ENCODE measurements at regions of chr2 and their contacts with region 1.

Region 1: GRCh38 chr2:71452565-71452964 is 796 bp upstream of the DYSF start:
- DNase-seq: no peak
- H3K4me3 ChIP-seq: no peak overlapping the region
- CTCF ChIP-seq: no peak

Region 2: DNA sequence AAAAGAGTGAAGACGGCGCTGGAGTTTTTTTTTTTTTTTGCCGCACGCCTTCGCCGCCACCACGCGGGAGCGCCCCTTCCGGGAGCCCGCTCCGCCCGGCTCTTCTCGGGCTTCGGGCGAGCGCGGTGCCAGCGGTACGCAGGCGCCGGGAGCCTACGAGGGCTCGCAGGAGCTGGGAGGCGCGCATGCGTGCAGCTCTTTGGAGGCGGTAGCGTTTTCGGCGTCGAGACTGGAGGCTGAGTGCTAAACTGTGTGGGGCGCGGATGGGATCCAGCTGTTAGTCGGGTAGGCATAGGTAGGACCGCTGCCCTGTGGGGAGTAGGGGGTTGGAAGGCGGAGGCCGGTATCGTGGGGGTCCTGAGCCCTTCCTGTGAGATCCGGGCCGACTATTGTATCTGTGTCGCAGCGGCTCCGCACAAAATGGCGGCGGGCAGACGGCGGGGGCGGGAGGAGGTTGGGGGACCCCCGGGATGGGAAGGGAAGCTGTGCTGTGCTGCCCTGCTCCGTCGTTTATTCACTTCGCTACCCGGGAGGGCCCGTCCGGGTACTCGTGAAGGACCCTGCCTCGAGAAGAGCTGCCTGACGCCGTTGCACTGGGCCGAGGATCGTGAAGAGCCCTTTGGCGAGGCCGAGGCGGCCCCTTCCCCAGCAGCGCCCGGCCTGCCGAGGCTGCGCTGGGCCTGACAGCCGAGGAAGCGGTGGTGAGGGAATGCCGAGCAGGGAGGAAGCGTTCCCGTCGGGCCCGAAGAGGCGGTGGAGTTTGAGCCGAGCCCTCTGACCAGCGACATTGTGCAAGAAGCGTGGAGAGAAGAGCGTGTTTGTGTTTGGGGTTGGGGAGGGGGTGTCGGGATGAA is 120.8 kb before region 1 on chr2 and contains the start of gene ZNF638:
- CTCF ChIA-PET with region 1: no interaction called
- POLR2A ChIA-PET with region 1: no interaction called
- DNase-seq: peak; percentile 16
- H3K4me3 ChIP-seq: peak within 1 kb of the TSS; percentile 99
- CTCF ChIP-seq: peak; percentile 62

Region 3: DNA sequence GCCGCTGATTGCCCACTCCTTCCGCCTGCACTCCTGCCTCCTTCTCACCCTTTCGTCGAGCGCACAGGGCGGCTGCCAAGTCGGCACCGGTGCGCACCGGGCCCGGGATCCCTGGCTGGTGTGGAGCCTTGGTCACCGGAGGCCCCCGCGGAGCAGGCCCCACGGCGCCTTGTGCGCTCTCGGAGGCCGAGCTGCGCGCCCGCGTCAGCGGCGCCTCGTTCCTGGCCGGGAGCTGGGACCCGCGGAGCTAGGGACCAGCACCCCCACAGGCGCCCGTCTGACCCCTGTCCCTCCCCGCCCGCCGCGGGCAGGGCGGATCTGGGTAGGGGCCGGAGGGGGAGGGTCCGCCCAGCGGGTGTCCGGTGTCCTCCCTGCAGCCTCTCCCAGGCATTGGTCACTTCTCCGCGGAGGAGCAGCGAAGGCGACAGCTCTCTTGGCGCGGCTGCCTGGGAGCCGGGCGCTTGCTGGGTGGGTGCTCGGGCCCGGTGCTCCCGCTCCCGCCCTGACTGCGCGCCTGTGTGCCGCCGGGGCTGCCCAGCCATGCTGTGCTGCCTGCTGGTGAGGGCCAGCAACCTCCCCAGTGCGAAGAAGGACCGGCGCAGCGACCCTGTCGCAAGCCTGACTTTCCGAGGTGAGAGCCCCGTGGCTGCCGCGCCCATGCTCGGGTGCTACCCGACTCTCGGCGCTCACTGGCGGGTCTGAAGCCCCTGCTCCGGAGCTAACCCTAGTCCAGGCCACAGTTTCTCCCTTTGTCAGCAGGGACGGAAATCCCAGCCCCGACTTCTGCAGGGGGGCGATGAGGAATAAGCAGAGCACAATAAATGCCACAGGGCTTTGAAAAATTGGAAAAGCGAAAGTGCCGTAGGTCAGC is 14.0 kb after region 1 on chr2:
- CTCF ChIA-PET with region 1: interaction called, 106 read pairs
- POLR2A ChIA-PET with region 1: interaction called, 3 read pairs
- DNase-seq: no peak
- H3K4me3 ChIP-seq: peak overlapping the region; percentile 61
- CTCF ChIP-seq: no peak